CD4-positive, alpha-beta memory T cell (primary cell): ENCODE measurements at regions of chr13 and their contacts with region 1.

Region 1: GRCh38 chr13:98896634-98897155 is 81.2 kb downstream of the DOCK9 start:
- DNase-seq: no peak
- H3K4me3 ChIP-seq: no peak overlapping the region
- H3K4me3 Mint-ChIP-seq: no peak overlapping the region
- H3K27ac ChIP-seq: no peak overlapping the region
- H3K27ac Mint-ChIP-seq: peak overlapping the region in 3 of 7 donors; percentile 4 to 74 (median 24)
- H3K4me1 ChIP-seq: no peaks in the 10 kb centered on the region
- H3K4me1 Mint-ChIP-seq: peaks cover 0 to 4% (median 0%) of the 10 kb centered on the region in 4 donors
- H3K27me3 ChIP-seq: no peaks in the 10 kb centered on the region
- H3K27me3 Mint-ChIP-seq: no peaks in the 10 kb centered on the region

Region 2: GRCh38 chr13:99075268-99076191 is 178.8 kb after region 1 on chr13:
- CTCF ChIA-PET with region 1: no interaction called
- POLR2A ChIA-PET with region 1: no interaction called
- intact Hi-C with region 1: loop called (anchors 5 kb)
- DNase-seq: peak; percentile 48 to 70 (median 50)
- H3K4me3 ChIP-seq: no peak overlapping the region
- H3K4me3 Mint-ChIP-seq: peak overlapping the region; percentile 68 to 79 (median 72)
- H3K27ac ChIP-seq: peak overlapping the region; percentile 55
- H3K27ac Mint-ChIP-seq: peak overlapping the region; percentile 88 to 96 (median 92)
- H3K4me1 ChIP-seq: peaks cover 68% of the 10 kb centered on the region
- H3K4me1 Mint-ChIP-seq: peaks cover 59 to 93% (median 75%) of the 10 kb centered on the region in 4 donors
- H3K27me3 ChIP-seq: no peaks in the 10 kb centered on the region
- H3K27me3 Mint-ChIP-seq: no peaks in the 10 kb centered on the region

Region 3: GRCh38 chr13:99105160-99105559 is 208.5 kb after region 1 on chr13:
- CTCF ChIA-PET with region 1: no interaction called
- POLR2A ChIA-PET with region 1: no interaction called
- intact Hi-C with region 1: no loop called
- DNase-seq: no peak
- H3K4me3 ChIP-seq: no peak overlapping the region
- H3K4me3 Mint-ChIP-seq: no peak overlapping the region
- H3K27ac ChIP-seq: no peak overlapping the region
- H3K27ac Mint-ChIP-seq: no peak overlapping the region
- H3K4me1 ChIP-seq: no peaks in the 10 kb centered on the region
- H3K4me1 Mint-ChIP-seq: peaks cover 0 to 2% (median 0%) of the 10 kb centered on the region in 4 donors
- H3K27me3 ChIP-seq: peaks cover 2% of the 10 kb centered on the region
- H3K27me3 Mint-ChIP-seq: peaks cover 3 to 6% of the 10 kb centered on the region in 2 donors